ENCODE measurements at regions of chr1 and their contacts with region 1.

Region 1: GRCh38 chr1:59412718-59413326 is 115.9 kb downstream of the FGGY start:
- DNase-seq: no peak
- ATAC-seq: no peak
- H3K4me3 ChIP-seq: no peak overlapping the region
- H3K4me3 Mint-ChIP-seq: no peak overlapping the region
- H3K27ac ChIP-seq: no peak overlapping the region
- H3K27ac Mint-ChIP-seq: no peak overlapping the region
- H3K4me1 ChIP-seq: no peaks in the 10 kb centered on the region
- H3K4me1 Mint-ChIP-seq: no peaks in the 10 kb centered on the region
- H3K27me3 ChIP-seq: no peaks in the 10 kb centered on the region
- H3K27me3 Mint-ChIP-seq: no peaks in the 10 kb centered on the region
- CTCF ChIP-seq: no peak

Region 2: GRCh38 chr1:59384443-59384842 is 28.4 kb before region 1 on chr1:
- CTCF ChIA-PET with region 1: no interaction called
- POLR2A ChIA-PET with region 1: no interaction called
- intact Hi-C with region 1: loop called in 1 of 2 experiments (anchors 1 kb)
- DNase-seq: no peak
- ATAC-seq: no peak
- H3K4me3 ChIP-seq: no peak overlapping the region
- H3K4me3 Mint-ChIP-seq: no peak overlapping the region
- H3K27ac ChIP-seq: no peak overlapping the region
- H3K27ac Mint-ChIP-seq: no peak overlapping the region
- H3K4me1 ChIP-seq: no peaks in the 10 kb centered on the region
- H3K4me1 Mint-ChIP-seq: no peaks in the 10 kb centered on the region
- H3K27me3 ChIP-seq: no peaks in the 10 kb centered on the region
- H3K27me3 Mint-ChIP-seq: no peaks in the 10 kb centered on the region
- CTCF ChIP-seq: no peak